Activated CD8-positive, alpha-beta T cell treated with anti-CD3 and anti-CD28 coated beads for 36 hours (primary cell): ENCODE measurements at regions of chr17 and their contacts with region 1.

Region 1: GRCh38 chr17:8222630-8223356 is 12.4 kb upstream of the AURKB start:
- DNase-seq: peak; percentile 95
- ATAC-seq: peak; percentile 40
- H3K4me3 Mint-ChIP-seq: peak overlapping the region; percentile 97
- H3K27ac Mint-ChIP-seq: peak overlapping the region; percentile 99
- H3K4me1 Mint-ChIP-seq: peaks cover 34% of the 10 kb centered on the region
- H3K27me3 Mint-ChIP-seq: peaks cover 8% of the 10 kb centered on the region
- CTCF ChIP-seq: no peak

Region 2: GRCh38 chr17:8138672-8139371 is 84.0 kb before region 1 on chr17:
- CTCF ChIA-PET with region 1: interaction called, 5 read pairs
- POLR2A ChIA-PET with region 1: interaction called, 3 read pairs
- intact Hi-C with region 1: loop called (anchors 5 kb)
- DNase-seq: peak; percentile 98
- ATAC-seq: peak; percentile 90
- H3K4me3 Mint-ChIP-seq: no peak overlapping the region
- H3K27ac Mint-ChIP-seq: no peak overlapping the region
- H3K4me1 Mint-ChIP-seq: no peaks in the 10 kb centered on the region
- H3K27me3 Mint-ChIP-seq: peaks cover 3% of the 10 kb centered on the region
- CTCF ChIP-seq: peak; percentile 87

Region 3: GRCh38 chr17:8204761-8205555 is 17.8 kb before region 1 on chr17:
- CTCF ChIA-PET with region 1: interaction called, 8 read pairs
- POLR2A ChIA-PET with region 1: interaction called, 113 read pairs
- intact Hi-C with region 1: no loop called
- DNase-seq: no peak
- ATAC-seq: no peak
- H3K4me3 Mint-ChIP-seq: no peak overlapping the region
- H3K27ac Mint-ChIP-seq: no peak overlapping the region
- H3K4me1 Mint-ChIP-seq: peaks cover 16% of the 10 kb centered on the region
- H3K27me3 Mint-ChIP-seq: no peaks in the 10 kb centered on the region
- CTCF ChIP-seq: no peak

Region 4: GRCh38 chr17:8237175-8237574 is 14.4 kb after region 1 on chr17:
- CTCF ChIA-PET with region 1: interaction called, 3 read pairs
- POLR2A ChIA-PET with region 1: interaction called, 232 read pairs
- intact Hi-C with region 1: no loop called
- DNase-seq: no peak
- ATAC-seq: no peak
- H3K4me3 Mint-ChIP-seq: no peak overlapping the region
- H3K27ac Mint-ChIP-seq: no peak overlapping the region
- H3K4me1 Mint-ChIP-seq: peaks cover 11% of the 10 kb centered on the region
- H3K27me3 Mint-ChIP-seq: no peaks in the 10 kb centered on the region
- CTCF ChIP-seq: no peak

Region 5: GRCh38 chr17:8300627-8301242 is 77.9 kb after region 1 on chr17:
- CTCF ChIA-PET with region 1: interaction called, 11 read pairs
- POLR2A ChIA-PET with region 1: interaction called, 11 read pairs
- intact Hi-C with region 1: loop called (anchors 5 kb)
- DNase-seq: peak; percentile 70
- ATAC-seq: peak; percentile 95
- H3K4me3 Mint-ChIP-seq: no peak overlapping the region
- H3K27ac Mint-ChIP-seq: peak overlapping the region; percentile 41
- H3K4me1 Mint-ChIP-seq: peaks cover 6% of the 10 kb centered on the region
- H3K27me3 Mint-ChIP-seq: no peaks in the 10 kb centered on the region
- CTCF ChIP-seq: peak; percentile 84

Region 6: DNA sequence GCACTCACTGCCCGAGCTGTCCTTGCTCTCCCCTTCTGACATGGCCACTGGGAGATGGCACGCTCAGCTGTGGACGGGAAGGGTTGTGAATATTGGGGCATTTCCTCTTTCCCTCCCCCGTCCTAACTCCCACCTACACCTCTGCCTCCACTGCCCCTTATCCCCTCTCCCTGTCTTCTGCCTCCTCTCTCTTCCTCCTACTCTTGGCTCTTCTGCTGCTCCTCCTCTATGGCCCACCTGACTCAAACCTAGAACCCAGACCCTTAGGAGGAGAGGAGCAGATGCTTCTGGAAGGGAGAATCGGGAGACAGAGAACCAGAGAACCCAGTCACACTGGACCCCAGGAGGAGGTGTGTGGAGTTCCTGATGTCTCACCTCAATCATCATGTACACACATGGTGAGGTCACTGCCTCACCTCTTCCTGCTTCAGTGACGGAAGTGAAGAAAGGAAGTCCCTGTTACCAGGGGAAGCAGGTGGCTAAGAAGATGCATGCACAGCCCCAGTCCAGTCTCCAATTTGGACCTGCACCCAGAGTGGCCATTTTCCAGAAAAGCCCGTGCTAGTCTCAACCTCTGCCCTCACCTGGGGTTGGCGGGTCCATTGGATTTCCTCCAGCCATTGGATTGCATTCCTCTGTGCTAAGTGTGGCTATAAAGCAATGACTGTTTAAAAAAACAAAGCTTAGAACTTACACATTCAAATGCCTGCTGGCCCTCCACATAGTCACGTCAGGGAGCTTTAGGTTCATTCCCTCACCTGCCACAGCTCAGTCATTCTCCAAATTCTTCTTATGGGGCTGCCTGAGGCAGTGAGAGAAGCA is 170.8 kb after region 1 on chr17:
- CTCF ChIA-PET with region 1: no interaction called
- POLR2A ChIA-PET with region 1: no interaction called
- intact Hi-C with region 1: no loop called
- DNase-seq: peak; percentile 72
- ATAC-seq: peak; percentile 98
- H3K4me3 Mint-ChIP-seq: no peak overlapping the region
- H3K27ac Mint-ChIP-seq: peak overlapping the region; percentile 91
- H3K4me1 Mint-ChIP-seq: peaks cover 9% of the 10 kb centered on the region
- H3K27me3 Mint-ChIP-seq: peaks cover 2% of the 10 kb centered on the region
- CTCF ChIP-seq: no peak

Region 7: GRCh38 chr17:8409966-8410864 is 187.4 kb after region 1 on chr17:
- CTCF ChIA-PET with region 1: no interaction called
- POLR2A ChIA-PET with region 1: no interaction called
- intact Hi-C with region 1: no loop called
- DNase-seq: peak; percentile 84
- ATAC-seq: peak; percentile 85
- H3K4me3 Mint-ChIP-seq: no peak overlapping the region
- H3K27ac Mint-ChIP-seq: no peak overlapping the region
- H3K4me1 Mint-ChIP-seq: peaks cover 13% of the 10 kb centered on the region
- H3K27me3 Mint-ChIP-seq: peaks cover 9% of the 10 kb centered on the region
- CTCF ChIP-seq: peak; percentile 96